ENCODE measurements at regions of chr19 and their contacts with region 1.

Region 1: GRCh38 chr19:42176990-42177685 is 40.3 kb downstream of the DEDD2 start:
- DNase-seq: no peak
- ATAC-seq: peak; percentile 96
- H3K4me3 ChIP-seq: peak overlapping the region; percentile 27; the same call in 1 of the 2 replicates
- H3K27ac ChIP-seq: no peak overlapping the region
- H3K4me1 ChIP-seq: no peaks in the 10 kb centered on the region
- H3K27me3 ChIP-seq: peaks cover 9 to 32% of the 10 kb centered on the region in 2 experiments
- CTCF ChIP-seq: peak in 2 of 3 experiments; percentile 39 to 47; a peak in 3 of 6 replicates
- EP300 ChIP-seq: no peak
- POLR2A ChIP-seq: no peak
- RAD21 ChIP-seq: peak; percentile 14; the same call in 1 of the 2 replicates

Region 2: DNA sequence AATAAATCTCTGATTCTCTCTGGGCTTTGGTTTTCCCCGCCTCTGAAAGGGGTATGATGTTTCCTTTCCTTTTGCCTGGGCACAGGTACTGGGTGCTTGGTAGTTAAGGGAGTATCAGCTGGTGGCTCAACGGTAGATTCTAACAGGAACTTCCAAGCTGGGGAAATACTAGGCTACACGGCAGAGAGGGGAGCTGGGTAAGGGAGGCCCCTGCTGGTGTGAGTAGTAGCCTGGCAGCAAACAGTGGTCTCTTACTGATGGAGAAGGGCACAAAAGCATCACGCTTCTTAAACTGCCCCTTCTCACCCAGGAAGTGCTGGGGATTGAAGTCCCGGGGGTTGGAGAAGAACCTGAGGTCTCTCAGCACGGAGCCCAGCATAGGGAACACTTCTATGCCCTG is 1268.2 kb before region 1 on chr19:
- CTCF ChIA-PET with region 1: no interaction called
- POLR2A ChIA-PET with region 1: no interaction called
- RAD21 ChIA-PET with region 1: no interaction called
- SMC1A ChIA-PET with region 1: no interaction called
- in situ Hi-C with region 1: no loop called
- intact Hi-C with region 1: no loop called
- DNase-seq: no peak
- ATAC-seq: peak; percentile 63
- H3K4me3 ChIP-seq: no peak overlapping the region
- H3K27ac ChIP-seq: no peak overlapping the region
- H3K4me1 ChIP-seq: no peaks in the 10 kb centered on the region
- H3K27me3 ChIP-seq: no peaks in the 10 kb centered on the region; a peak in 2 of 4 replicates
- CTCF ChIP-seq: peak; percentile 31 to 40 (median 37); a peak in 4 of 6 replicates
- EP300 ChIP-seq: no peak
- POLR2A ChIP-seq: no peak
- RAD21 ChIP-seq: 0 out of 2 replicates have a peak, but pooled peaks have one; percentile 28

Region 3: DNA sequence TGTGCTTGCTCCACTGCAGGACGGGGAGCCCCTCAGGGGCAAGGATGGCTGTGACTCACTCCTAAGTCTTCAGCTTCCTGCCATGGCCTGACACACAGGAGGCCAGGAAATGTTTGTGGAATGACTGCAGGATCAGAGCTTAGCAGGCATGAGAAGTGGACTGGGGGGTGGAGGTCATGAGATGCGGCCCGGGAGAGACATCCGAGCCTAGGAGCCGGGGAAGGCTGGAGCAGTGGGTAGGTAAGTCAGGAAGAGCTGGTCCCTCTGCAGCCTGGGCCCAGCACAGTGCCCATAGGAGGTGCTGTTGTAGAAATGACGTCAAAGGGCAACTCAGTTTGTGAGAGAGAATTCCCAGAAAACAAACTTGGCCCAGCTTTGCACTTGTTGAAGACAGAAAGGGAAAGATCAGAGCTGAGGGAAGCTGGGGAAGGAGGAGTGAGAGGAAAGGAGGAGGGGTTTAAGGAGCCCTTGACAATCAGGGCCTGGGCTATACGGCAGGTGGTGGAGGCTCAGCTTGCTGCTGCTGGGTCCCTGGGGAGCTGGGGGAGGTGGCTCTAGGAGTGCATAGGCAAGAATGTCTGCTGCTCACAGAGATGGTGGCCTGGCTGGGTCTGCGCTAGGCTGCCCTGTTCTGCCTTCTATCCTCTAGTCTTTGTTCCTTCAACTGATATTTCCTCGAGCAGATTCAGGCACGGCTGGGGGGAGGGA is 63.3 kb before region 1 on chr19:
- CTCF ChIA-PET with region 1: interaction called, 71 read pairs
- POLR2A ChIA-PET with region 1: no interaction called
- RAD21 ChIA-PET with region 1: interaction called, 4 read pairs
- SMC1A ChIA-PET with region 1: interaction called, 52 read pairs
- in situ Hi-C with region 1: no loop called
- intact Hi-C with region 1: no loop called
- DNase-seq: peak; percentile 40
- ATAC-seq: peak; percentile 90
- H3K4me3 ChIP-seq: 0 out of 2 replicates have a peak overlapping the region, but pooled peaks have one; percentile 2
- H3K27ac ChIP-seq: peak overlapping the region; percentile 88
- H3K4me1 ChIP-seq: peaks cover 53% of the 10 kb centered on the region
- H3K27me3 ChIP-seq: no peaks in the 10 kb centered on the region
- CTCF ChIP-seq: peak in 2 of 3 experiments; percentile 8 to 18; a peak in 1 of 6 replicates
- EP300 ChIP-seq: no peak
- POLR2A ChIP-seq: 0 out of 2 replicates have a peak, but pooled peaks have one; percentile 21
- RAD21 ChIP-seq: no peak

Region 4: DNA sequence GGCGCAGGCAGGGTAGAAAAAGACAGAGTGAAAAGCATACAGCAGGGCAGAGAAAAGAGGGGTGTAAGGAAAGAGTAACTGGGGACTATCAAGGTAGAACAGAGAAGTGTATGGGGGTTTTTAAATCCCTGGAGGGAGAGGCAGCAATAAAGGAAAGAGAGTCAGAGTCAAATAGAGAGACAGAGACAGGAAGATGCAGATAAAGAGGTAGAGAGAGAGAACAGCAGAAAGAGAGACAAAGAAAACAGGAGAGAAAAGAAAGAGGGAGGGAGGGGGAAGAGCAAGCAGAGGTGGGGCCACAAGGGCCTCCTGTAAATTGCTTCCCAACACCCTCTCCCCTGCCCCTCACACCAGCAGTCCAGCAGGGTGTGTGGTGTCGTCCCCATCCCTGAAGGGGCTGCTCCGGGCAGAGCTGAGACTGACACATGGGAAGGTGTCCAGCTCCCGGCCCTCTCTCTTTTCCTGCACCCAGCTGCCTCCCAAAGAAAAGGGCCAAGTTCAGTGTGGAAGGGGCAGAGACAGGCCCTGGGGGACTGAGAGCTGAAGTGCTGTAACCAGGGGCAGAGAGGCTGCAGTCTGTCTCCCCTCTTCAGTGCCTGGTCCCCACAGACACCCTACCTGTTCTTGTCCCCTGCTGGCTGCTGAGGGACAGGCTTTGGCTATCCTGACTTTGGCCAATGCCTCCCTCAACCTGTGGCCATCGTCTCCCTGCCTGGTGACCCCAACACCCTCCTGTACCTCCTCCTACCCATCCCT is 27.5 kb before region 1 on chr19:
- CTCF ChIA-PET with region 1: no interaction called
- POLR2A ChIA-PET with region 1: no interaction called
- RAD21 ChIA-PET with region 1: no interaction called
- SMC1A ChIA-PET with region 1: no interaction called
- in situ Hi-C with region 1: no loop called
- intact Hi-C with region 1: loop called (anchors 2 kb)
- DNase-seq: no peak
- ATAC-seq: peak; percentile 48
- H3K4me3 ChIP-seq: no peak overlapping the region
- H3K27ac ChIP-seq: no peak overlapping the region
- H3K4me1 ChIP-seq: peaks cover 4% of the 10 kb centered on the region
- H3K27me3 ChIP-seq: peaks cover 0 to 2% of the 10 kb centered on the region in 2 experiments; a peak in 3 of 4 replicates
- CTCF ChIP-seq: no peak
- EP300 ChIP-seq: no peak
- POLR2A ChIP-seq: no peak
- RAD21 ChIP-seq: no peak

Region 5: GRCh38 chr19:42219812-42220750 is 42.9 kb after region 1 on chr19 and contains the start of gene ZNF526:
- CTCF ChIA-PET with region 1: no interaction called
- POLR2A ChIA-PET with region 1: no interaction called
- RAD21 ChIA-PET with region 1: no interaction called
- SMC1A ChIA-PET with region 1: no interaction called
- in situ Hi-C with region 1: no loop called
- intact Hi-C with region 1: no loop called
- DNase-seq: peak; percentile 95
- ATAC-seq: peak; percentile 93
- H3K4me3 ChIP-seq: peak within 1 kb of the TSS; percentile 97
- H3K27ac ChIP-seq: peak within 1 kb of the TSS; percentile 83
- H3K4me1 ChIP-seq: peaks cover 18% of the 10 kb centered on the region
- H3K27me3 ChIP-seq: no peaks in the 10 kb centered on the region
- CTCF ChIP-seq: no peak
- EP300 ChIP-seq: no peak
- POLR2A ChIP-seq: peak; percentile 91
- RAD21 ChIP-seq: no peak
- polyA plus RNA-seq, gene ZNF526: 1.8 to 2.0 TPM

Measured in GM12878 (cell line).